HEK293T (cell line): ENCODE measurements at regions of chr10 and their contacts with region 1.

Region 1: GRCh38 chr10:114470956-114471905 is 66.9 kb upstream of the AFAP1L2 start:
- DNase-seq: peak; percentile 85

Region 2: GRCh38 chr10:114548662-114549061 is 77.4 kb after region 1 on chr10:
- CTCF ChIA-PET with region 1: interaction called, 10 read pairs
- POLR2A ChIA-PET with region 1: no interaction called
- DNase-seq: peak; percentile 39